Activated naive CD4-positive, alpha-beta T cell treated with anti-CD3 and anti-CD28 coated beads for 36 hours (primary cell): ENCODE measurements at regions of chr12 and their contacts with region 1.

Region 1: GRCh38 chr12:69879041-69879960 is 54.3 kb downstream of the MYRFL start:
- DNase-seq: peak; percentile 83
- H3K4me3 Mint-ChIP-seq: no peak overlapping the region
- H3K27ac Mint-ChIP-seq: no peak overlapping the region
- H3K4me1 Mint-ChIP-seq: peaks cover 4% of the 10 kb centered on the region
- H3K27me3 Mint-ChIP-seq: peaks cover 11% of the 10 kb centered on the region

Region 2: DNA sequence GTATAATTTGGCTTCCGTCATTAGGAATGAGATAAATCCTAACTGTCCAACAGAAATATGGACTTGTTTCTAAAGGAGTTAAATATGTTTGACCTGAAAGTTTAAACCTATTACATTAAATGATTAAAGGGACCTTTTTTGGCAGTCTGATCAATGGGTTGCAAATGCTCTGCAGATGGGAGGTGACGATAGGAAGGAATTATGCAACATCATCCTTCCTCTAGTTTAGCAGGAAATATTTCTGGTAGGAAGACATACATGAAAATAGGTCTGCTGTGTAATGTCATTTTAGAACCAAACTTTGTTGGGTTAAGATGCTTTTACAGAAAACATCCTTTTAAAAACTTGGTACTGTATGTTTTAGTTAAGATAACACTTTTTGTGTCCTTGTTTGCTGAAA is 271.2 kb before region 1 on chr12:
- CTCF ChIA-PET with region 1: no interaction called
- intact Hi-C with region 1: no loop called
- DNase-seq: no peak
- H3K4me3 Mint-ChIP-seq: no peak overlapping the region
- H3K27ac Mint-ChIP-seq: no peak overlapping the region
- H3K4me1 Mint-ChIP-seq: no peaks in the 10 kb centered on the region
- H3K27me3 Mint-ChIP-seq: no peaks in the 10 kb centered on the region

Region 3: GRCh38 chr12:69894800-69895383 is 15.6 kb after region 1 on chr12:
- CTCF ChIA-PET with region 1: interaction called, 27 read pairs
- intact Hi-C with region 1: no loop called
- DNase-seq: no peak
- H3K4me3 Mint-ChIP-seq: no peak overlapping the region
- H3K27ac Mint-ChIP-seq: no peak overlapping the region
- H3K4me1 Mint-ChIP-seq: no peaks in the 10 kb centered on the region
- H3K27me3 Mint-ChIP-seq: no peaks in the 10 kb centered on the region

Region 4: GRCh38 chr12:69900720-69901131 is 21.4 kb after region 1 on chr12:
- CTCF ChIA-PET with region 1: interaction called, 19 read pairs
- intact Hi-C with region 1: no loop called
- DNase-seq: peak; percentile 81
- H3K4me3 Mint-ChIP-seq: no peak overlapping the region
- H3K27ac Mint-ChIP-seq: no peak overlapping the region
- H3K4me1 Mint-ChIP-seq: no peaks in the 10 kb centered on the region
- H3K27me3 Mint-ChIP-seq: no peaks in the 10 kb centered on the region

Region 5: GRCh38 chr12:70007687-70008086 is 128.4 kb after region 1 on chr12:
- CTCF ChIA-PET with region 1: no interaction called
- intact Hi-C with region 1: no loop called
- DNase-seq: no peak
- H3K4me3 Mint-ChIP-seq: no peak overlapping the region
- H3K27ac Mint-ChIP-seq: no peak overlapping the region
- H3K4me1 Mint-ChIP-seq: no peaks in the 10 kb centered on the region
- H3K27me3 Mint-ChIP-seq: peaks cover 6% of the 10 kb centered on the region

Region 6: GRCh38 chr12:70576346-70577282 is 697.3 kb after region 1 on chr12:
- CTCF ChIA-PET with region 1: interaction called, 12 read pairs
- intact Hi-C with region 1: loop called (anchors 1 kb)
- DNase-seq: no peak
- H3K4me3 Mint-ChIP-seq: no peak overlapping the region
- H3K27ac Mint-ChIP-seq: no peak overlapping the region
- H3K4me1 Mint-ChIP-seq: no peaks in the 10 kb centered on the region
- H3K27me3 Mint-ChIP-seq: peaks cover 7% of the 10 kb centered on the region

Region 7: GRCh38 chr12:70719672-70720420 is 840.5 kb after region 1 on chr12:
- CTCF ChIA-PET with region 1: interaction called, 4 read pairs
- intact Hi-C with region 1: loop called (anchors 1 kb)
- DNase-seq: peak; percentile 28
- H3K4me3 Mint-ChIP-seq: peak overlapping the region; percentile 45
- H3K27ac Mint-ChIP-seq: no peak overlapping the region
- H3K4me1 Mint-ChIP-seq: peaks cover 6% of the 10 kb centered on the region
- H3K27me3 Mint-ChIP-seq: peaks cover 9% of the 10 kb centered on the region